ENCODE measurements at regions of chr12 and their contacts with region 1.

Region 1: DNA sequence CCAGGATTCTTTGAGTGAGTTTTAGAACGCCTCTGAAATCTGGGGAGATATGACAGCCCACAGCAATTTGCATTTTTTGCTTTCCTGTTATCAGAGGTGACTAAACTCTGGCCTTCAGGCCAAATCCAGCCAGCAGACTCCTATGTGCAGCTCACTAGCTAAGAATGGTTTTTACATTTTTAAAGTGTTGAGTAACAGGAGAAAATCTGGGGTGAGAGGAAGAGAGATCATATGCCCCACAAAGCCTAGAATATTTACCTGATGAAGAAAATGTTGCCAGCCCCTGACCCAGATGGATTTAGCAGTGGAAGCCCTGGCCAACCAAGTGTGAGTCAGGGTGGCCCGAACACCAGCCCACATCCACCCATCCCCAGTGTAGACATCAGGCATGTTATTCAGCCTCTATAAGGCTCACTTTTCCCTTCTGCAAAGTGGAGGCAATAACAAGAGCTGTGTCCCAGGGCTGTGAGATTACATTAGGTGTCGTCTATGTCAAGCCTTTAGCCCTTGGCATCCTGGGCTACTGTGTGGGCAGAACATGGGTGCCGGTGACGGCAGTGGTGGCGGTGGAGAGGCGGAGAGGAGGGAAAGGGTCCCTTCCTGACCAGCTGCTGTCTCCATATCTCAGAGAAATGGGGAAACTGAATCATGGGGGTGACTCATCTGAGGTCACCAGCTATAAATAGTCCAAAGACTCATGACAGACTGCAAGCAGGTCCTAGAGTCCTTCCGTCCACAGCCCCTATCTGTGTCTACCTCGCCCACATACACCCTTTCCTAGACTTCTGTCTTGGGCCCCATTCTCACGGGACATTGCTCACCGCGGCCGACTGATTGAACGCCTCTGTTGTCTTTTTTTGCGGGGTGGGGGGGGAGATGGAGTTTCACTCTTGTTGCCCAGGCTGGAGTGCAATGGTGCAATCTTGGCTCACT is 32.6 kb upstream of the CD9 start:
- DNase-seq: peak in 3 of 9 donors; percentile 10 to 76 (median 25)
- ATAC-seq: peak; percentile 86
- H3K4me3 ChIP-seq: no peak overlapping the region
- H3K4me3 Mint-ChIP-seq: peak overlapping the region; percentile 35 to 75 (median 62)
- H3K27ac ChIP-seq: no peak overlapping the region
- H3K27ac Mint-ChIP-seq: peak overlapping the region in 8 of 9 donors; percentile 10 to 85 (median 56)
- H3K4me1 ChIP-seq: peaks cover 0 to 25% of the 10 kb centered on the region in 2 donors
- H3K4me1 Mint-ChIP-seq: peaks cover 22 to 48% (median 33%) of the 10 kb centered on the region in 7 donors
- H3K27me3 ChIP-seq: no peaks in the 10 kb centered on the region
- H3K27me3 Mint-ChIP-seq: peaks cover 0 to 6% (median 0%) of the 10 kb centered on the region in 5 donors

Region 2: DNA sequence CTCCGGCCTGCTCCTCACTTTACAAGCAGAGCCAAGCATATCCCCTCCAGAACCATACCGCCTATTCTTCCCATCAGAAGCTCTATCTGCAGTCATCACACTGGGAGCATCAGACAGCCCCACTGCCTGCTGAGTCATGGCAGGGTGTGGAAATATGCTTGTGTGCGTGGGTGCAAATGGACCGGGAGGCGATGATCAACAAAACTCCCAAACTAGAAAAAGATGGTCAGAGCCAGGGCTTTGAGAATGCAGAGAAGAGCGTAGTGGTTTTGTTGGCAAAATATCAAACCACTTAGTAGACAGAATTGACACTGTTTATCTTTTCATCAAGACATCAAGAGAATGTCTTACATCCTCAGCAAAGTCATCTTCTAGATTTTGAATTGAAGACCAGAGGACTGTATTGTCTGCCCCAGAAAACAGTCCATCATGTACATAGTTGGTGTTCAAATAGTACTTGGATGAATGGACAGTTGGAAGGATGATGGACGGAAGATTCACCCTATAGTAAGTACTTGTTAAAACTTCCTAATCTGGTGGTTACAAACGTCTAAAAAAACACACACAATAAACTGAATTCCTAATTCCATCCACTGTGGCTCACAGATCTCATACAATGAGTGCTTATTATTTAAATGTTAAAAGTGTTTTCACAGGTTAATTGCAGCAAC is 98.0 kb before region 1 on chr12:
- CTCF ChIA-PET with region 1: no interaction called
- POLR2A ChIA-PET with region 1: interaction called, 3 read pairs
- intact Hi-C with region 1: loop called in 1 of 2 experiments (anchors 10 kb)
- DNase-seq: peak in 6 of 9 donors; percentile 19 to 50 (median 35)
- ATAC-seq: peak; percentile 36
- H3K4me3 ChIP-seq: no peak overlapping the region
- H3K4me3 Mint-ChIP-seq: peak overlapping the region in 7 of 10 donors; percentile 2 to 75 (median 13)
- H3K27ac ChIP-seq: no peak overlapping the region
- H3K27ac Mint-ChIP-seq: peak overlapping the region in 2 of 9 donors; percentile 2 to 50
- H3K4me1 ChIP-seq: peaks cover 3 to 16% of the 10 kb centered on the region in 2 donors
- H3K4me1 Mint-ChIP-seq: peaks cover 18 to 24% (median 22%) of the 10 kb centered on the region in 7 donors
- H3K27me3 ChIP-seq: no peaks in the 10 kb centered on the region
- H3K27me3 Mint-ChIP-seq: peaks cover 0 to 11% (median 2%) of the 10 kb centered on the region in 5 donors

Measured in naive thymus-derived CD4-positive, alpha-beta T cell (primary cell).